CD4-positive, alpha-beta memory T cell (primary cell): ENCODE measurements at regions of chr6 and their contacts with region 1.

Region 1: DNA sequence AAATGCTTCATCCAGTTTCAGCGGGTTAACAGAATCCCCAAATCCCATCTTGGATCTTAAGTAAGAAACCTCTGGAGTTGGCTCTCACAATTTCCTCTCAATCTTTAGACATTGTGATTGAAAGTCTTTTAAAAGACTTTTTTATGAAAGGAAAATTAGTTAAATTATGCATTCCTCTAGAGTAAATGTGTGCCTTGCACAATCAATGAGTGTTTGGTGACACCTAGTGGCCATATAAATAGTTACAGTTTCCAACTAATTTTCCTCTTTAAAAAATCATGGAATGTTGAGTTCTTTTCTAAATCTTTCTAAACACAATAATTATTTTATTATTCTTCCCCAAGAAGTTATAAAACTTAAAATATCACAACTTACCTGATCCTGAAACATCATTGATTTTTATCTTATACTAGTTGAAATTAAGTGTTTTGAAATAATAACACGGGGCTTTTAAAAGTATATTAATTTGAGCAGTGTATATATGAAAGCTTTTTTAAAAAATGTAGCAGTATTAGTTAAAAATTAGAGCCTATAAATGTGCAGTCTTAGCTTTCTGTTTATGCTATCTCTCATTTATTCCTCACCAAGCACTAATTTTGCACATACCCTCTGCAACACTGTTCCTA is 66.4 kb downstream of the PKHD1 start:
- DNase-seq: peak in 4 of 5 donors; percentile 9 to 28 (median 15)
- H3K4me3 ChIP-seq: no peak overlapping the region
- H3K4me3 Mint-ChIP-seq: no peak overlapping the region
- H3K27ac ChIP-seq: no peak overlapping the region
- H3K27ac Mint-ChIP-seq: no peak overlapping the region
- H3K4me1 ChIP-seq: no peaks in the 10 kb centered on the region
- H3K4me1 Mint-ChIP-seq: no peaks in the 10 kb centered on the region
- H3K27me3 ChIP-seq: no peaks in the 10 kb centered on the region
- H3K27me3 Mint-ChIP-seq: peaks cover 1 to 3% of the 10 kb centered on the region in 2 donors

Region 2: GRCh38 chr6:51531623-51532022 is 489.4 kb before region 1 on chr6:
- CTCF ChIA-PET with region 1: no interaction called
- POLR2A ChIA-PET with region 1: no interaction called
- intact Hi-C with region 1: no loop called
- DNase-seq: no peak
- H3K4me3 ChIP-seq: no peak overlapping the region
- H3K4me3 Mint-ChIP-seq: no peak overlapping the region
- H3K27ac ChIP-seq: no peak overlapping the region
- H3K27ac Mint-ChIP-seq: no peak overlapping the region
- H3K4me1 ChIP-seq: no peaks in the 10 kb centered on the region
- H3K4me1 Mint-ChIP-seq: no peaks in the 10 kb centered on the region
- H3K27me3 ChIP-seq: no peaks in the 10 kb centered on the region
- H3K27me3 Mint-ChIP-seq: no peaks in the 10 kb centered on the region

Region 3: GRCh38 chr6:52009466-52010140 is 11.5 kb before region 1 on chr6:
- CTCF ChIA-PET with region 1: interaction called, 18 read pairs
- POLR2A ChIA-PET with region 1: no interaction called
- intact Hi-C with region 1: no loop called
- DNase-seq: no peak
- H3K4me3 ChIP-seq: no peak overlapping the region
- H3K4me3 Mint-ChIP-seq: no peak overlapping the region
- H3K27ac ChIP-seq: no peak overlapping the region
- H3K27ac Mint-ChIP-seq: no peak overlapping the region
- H3K4me1 ChIP-seq: no peaks in the 10 kb centered on the region
- H3K4me1 Mint-ChIP-seq: no peaks in the 10 kb centered on the region
- H3K27me3 ChIP-seq: no peaks in the 10 kb centered on the region
- H3K27me3 Mint-ChIP-seq: peaks cover 9 to 16% of the 10 kb centered on the region in 2 donors

Region 4: DNA sequence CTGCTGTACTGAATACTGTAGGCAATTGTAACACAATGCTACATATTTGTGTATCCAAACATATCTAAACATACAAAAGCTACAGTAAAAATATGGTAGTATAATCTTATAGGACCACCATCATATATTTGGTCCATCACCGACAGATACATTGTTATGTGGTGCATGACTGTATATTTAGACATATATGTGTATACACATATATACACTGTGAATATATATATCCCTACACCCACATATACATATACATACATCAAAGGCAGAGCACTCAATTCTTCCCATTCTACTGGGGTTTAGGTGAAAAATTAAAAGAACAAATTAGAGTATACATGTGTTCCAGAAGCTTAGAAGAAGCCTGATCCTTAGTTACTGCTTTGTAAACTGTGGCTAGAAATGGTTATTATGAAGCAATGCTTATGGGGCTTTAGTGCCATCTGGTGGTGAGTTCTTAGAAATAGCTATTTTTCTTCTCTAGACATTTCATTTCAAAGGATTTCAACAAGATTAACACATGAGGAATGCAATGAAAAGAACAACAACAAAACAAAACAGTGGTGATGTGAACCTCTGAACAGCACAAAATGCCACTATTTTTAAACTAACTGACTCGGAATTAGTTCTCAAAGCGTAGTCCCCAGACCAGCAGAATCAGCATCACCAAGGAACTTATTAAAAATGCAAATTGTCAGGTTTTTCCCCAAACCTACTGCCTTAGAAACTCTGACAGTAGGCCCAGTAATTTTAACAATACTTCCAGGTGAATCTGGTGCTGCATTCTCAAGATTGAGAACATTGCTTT is 28.4 kb after region 1 on chr6:
- CTCF ChIA-PET with region 1: interaction called, 13 read pairs
- POLR2A ChIA-PET with region 1: no interaction called
- intact Hi-C with region 1: no loop called
- DNase-seq: peak in 4 of 5 donors; percentile 11 to 26 (median 18)
- H3K4me3 ChIP-seq: no peak overlapping the region
- H3K4me3 Mint-ChIP-seq: no peak overlapping the region
- H3K27ac ChIP-seq: no peak overlapping the region
- H3K27ac Mint-ChIP-seq: no peak overlapping the region
- H3K4me1 ChIP-seq: no peaks in the 10 kb centered on the region
- H3K4me1 Mint-ChIP-seq: no peaks in the 10 kb centered on the region
- H3K27me3 ChIP-seq: peaks cover 6% of the 10 kb centered on the region
- H3K27me3 Mint-ChIP-seq: peaks cover 18 to 27% of the 10 kb centered on the region in 2 donors

Region 5: DNA sequence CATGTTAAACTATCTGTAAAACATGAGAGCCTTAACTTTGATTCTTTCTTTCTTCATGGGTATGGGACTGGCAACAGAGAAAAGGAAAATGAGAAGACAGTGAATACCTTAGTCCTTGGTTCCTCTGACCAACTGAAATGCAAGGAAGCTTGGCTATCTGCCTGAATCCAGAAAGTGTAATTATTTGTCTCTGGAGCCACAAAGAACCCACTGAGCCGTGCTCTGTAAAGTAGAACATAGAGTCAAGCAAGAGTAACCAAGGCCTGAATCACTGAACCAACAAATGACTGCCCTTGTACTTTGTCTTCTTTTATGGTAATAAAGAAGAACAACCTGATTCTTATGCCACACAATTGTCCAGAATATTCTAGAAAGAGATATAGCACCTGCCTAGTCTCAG is 38.8 kb after region 1 on chr6:
- CTCF ChIA-PET with region 1: no interaction called
- POLR2A ChIA-PET with region 1: no interaction called
- intact Hi-C with region 1: no loop called
- DNase-seq: no peak
- H3K4me3 ChIP-seq: no peak overlapping the region
- H3K4me3 Mint-ChIP-seq: no peak overlapping the region
- H3K27ac ChIP-seq: no peak overlapping the region
- H3K27ac Mint-ChIP-seq: no peak overlapping the region
- H3K4me1 ChIP-seq: peaks cover 14% of the 10 kb centered on the region
- H3K4me1 Mint-ChIP-seq: peaks cover 11 to 14% (median 12%) of the 10 kb centered on the region in 4 donors
- H3K27me3 ChIP-seq: no peaks in the 10 kb centered on the region
- H3K27me3 Mint-ChIP-seq: peaks cover 5 to 6% of the 10 kb centered on the region in 2 donors